AG04450 (cell line): ENCODE measurements at regions of chr21 and their contacts with region 1.

Region 1: DNA sequence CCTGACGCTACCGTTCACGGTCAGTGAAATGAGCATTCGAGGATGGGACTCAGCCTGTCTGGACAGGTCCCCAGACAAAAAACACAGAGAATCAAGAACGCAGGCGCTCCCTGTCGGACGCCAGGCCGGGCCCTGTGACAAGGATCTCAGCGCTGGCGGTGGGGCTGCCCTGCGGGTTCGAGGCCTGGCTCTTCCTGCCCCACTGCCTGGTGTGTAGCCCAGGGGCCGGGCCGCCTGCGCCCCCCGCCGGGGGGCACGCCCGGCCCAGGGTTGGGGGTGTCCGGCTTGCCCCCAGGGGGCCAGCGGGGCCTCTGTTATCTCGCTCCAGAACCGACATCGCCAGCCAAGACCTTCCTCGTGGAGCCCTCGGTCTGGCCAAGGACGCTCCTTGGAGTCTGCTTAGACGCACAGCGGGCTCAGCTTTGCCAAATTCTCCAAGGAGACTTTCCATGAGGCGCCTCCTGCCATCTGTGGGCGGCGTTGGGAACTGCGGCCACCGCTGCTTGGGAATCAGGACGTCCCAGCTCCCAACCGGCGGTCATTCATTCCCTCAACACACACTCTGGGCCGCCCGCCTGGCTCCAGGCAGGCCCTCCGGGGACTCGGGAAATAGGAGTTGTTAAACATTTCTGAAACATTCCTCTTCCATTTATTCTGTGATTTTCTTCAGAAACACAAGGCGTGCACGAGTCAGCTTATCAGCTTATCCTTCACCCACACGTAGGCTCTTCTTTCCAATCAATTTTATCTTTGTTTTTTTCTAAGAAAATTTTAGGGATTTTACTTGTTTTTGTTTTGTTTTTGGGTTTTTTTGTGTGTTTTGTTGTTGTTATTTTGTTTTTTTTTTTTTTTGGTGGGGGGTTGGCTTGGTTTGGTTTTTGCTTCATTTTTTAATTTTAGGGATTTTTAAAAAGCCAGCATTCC is 11.4 kb upstream of the RIPK4 start:
- DNase-seq: peak; percentile 30
- H3K4me3 ChIP-seq: no peak overlapping the region
- H3K27ac ChIP-seq: no peak overlapping the region
- H3K27me3 ChIP-seq: peaks cover 51% of the 10 kb centered on the region
- CTCF ChIP-seq: peak; percentile 77

Region 2: DNA sequence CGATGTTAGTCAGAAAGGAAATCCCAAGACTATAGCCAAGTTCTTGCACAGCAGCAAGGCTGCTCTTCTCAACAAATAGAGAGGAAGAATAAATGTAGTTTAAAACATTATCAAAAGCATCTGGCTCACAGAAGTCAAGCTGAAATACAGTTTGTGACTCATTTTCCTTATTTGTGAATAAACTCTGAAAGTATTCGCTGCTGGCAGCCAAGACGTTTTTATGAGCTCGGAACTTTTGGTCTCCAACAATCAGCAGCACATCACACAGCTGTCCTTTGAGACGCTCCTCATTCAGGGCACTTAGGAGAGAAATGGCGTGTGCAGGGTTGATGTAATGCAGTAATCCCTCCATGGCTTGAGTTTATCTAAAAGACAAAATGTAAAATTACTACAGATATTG is 215.5 kb after region 1 on chr21:
- CTCF ChIA-PET with region 1: no interaction called
- POLR2A ChIA-PET with region 1: interaction called, 10 read pairs
- DNase-seq: peak; percentile 65
- H3K4me3 ChIP-seq: no peak overlapping the region
- H3K27ac ChIP-seq: peak overlapping the region; percentile 41
- H3K27me3 ChIP-seq: no peaks in the 10 kb centered on the region
- CTCF ChIP-seq: no peak